ENCODE measurements at regions of chr3 and their contacts with region 1.

Region 1: GRCh38 chr3:161423911-161424522 is 52.7 kb upstream of the SPTSSB start:
- DNase-seq: peak; percentile 34
- ATAC-seq: no peak; the same call in 1 of the 2 replicates
- H3K4me3 ChIP-seq: no peak overlapping the region
- H3K27ac ChIP-seq: no peak overlapping the region
- H3K4me1 ChIP-seq: no peaks in the 10 kb centered on the region
- H3K27me3 ChIP-seq: no peaks in the 10 kb centered on the region
- CTCF ChIP-seq: peak; percentile 42 to 70 (median 68)
- POLR2A ChIP-seq: no peak
- RAD21 ChIP-seq: peak; percentile 87

Region 2: DNA sequence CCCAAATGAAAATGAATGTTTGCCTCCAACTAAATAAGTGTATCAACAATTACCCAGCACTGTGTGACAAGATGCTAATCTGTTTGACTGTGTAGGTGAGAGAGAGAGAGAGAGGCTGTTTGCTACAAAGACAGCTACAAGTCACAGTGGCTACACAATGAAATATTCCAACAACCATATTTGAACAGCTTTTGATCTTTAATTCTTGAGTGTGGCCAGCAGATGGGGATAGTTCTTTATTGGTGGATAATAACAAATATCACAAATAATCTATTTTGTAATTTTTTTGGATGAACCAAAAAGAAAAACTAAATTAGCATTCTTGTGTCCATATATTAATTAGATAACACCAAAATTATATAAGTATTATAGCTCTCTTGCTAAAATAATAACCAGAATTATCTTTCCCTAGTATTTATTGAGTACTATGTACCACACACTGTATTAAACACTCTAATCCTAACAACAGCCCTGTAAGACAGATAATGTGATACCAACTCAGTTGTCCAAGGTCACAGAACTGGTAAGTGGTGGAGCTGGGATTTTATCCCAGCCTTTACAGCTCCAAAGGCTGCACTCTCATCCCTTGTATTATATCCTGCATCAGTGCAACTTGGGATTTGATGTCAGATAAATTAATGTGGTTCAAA is 1260.7 kb before region 1 on chr3:
- CTCF ChIA-PET with region 1: no interaction called
- POLR2A ChIA-PET with region 1: no interaction called
- RAD21 ChIA-PET with region 1: no interaction called
- intact Hi-C with region 1: loop called (anchors 10 kb)
- DNase-seq: peak; percentile 23
- ATAC-seq: peak; percentile 75
- H3K4me3 ChIP-seq: no peak overlapping the region
- H3K27ac ChIP-seq: no peak overlapping the region
- H3K4me1 ChIP-seq: no peaks in the 10 kb centered on the region
- H3K27me3 ChIP-seq: no peaks in the 10 kb centered on the region
- CTCF ChIP-seq: peak; percentile 26 to 73 (median 54); a peak in 4 of 6 replicates
- POLR2A ChIP-seq: no peak
- RAD21 ChIP-seq: peak; percentile 80

Region 3: DNA sequence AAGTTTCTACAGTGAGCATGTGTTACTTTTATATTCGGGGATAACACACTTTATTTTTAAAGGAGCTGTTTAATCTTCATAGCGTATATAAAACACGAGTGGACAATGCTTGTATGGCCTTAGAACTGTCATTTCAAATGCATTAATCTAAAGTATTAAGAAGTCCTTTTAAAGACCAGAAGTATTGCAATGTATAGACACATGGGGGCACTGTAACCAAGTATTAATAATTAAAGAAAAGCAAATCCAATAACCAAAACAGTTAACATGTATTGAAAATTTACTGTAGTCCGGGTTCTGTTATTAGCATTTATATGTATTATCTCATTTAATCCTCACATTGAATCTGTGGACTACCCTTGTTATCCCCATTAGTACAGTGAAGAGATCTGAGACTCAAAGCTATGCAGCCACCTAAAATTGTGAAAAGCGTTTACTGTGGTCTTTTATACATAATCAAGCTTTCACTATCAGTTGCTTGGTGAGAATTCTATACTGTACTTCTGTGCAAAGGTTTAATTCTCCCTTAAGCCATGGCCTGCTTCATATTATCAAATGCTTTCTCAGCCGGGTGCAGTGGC is 737.0 kb before region 1 on chr3:
- CTCF ChIA-PET with region 1: no interaction called
- POLR2A ChIA-PET with region 1: no interaction called
- RAD21 ChIA-PET with region 1: no interaction called
- intact Hi-C with region 1: loop called (anchors 5 kb)
- DNase-seq: no peak
- ATAC-seq: peak; percentile 68; the same call in 1 of the 2 replicates
- H3K4me3 ChIP-seq: no peak overlapping the region
- H3K27ac ChIP-seq: no peak overlapping the region
- H3K4me1 ChIP-seq: peaks cover 0 to 2% of the 10 kb centered on the region in 2 experiments; a peak in 1 of 4 replicates
- H3K27me3 ChIP-seq: no peaks in the 10 kb centered on the region
- CTCF ChIP-seq: peak; percentile 12 to 70 (median 36); a peak in 3 of 6 replicates
- POLR2A ChIP-seq: no peak
- RAD21 ChIP-seq: peak; percentile 57

Region 4: DNA sequence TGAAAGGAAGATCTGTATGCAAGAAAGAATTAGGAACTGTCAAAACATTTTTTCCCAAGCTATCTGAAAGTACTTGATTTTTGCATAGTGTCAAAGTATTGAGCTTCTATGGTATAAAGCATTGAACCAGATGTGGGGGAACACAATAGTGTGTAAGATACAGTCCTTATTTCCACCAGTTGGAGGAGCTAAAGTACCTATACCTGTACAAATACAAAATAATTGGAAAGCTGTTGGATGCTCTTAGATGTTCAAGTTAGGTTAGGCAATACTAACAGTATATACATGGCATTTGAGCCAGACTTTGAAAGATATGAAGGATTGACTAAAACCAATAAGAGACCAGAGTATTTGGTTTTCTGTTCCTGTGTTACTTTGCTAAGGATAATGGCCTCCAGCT is 467.2 kb before region 1 on chr3:
- CTCF ChIA-PET with region 1: interaction called, 5 read pairs
- POLR2A ChIA-PET with region 1: no interaction called
- RAD21 ChIA-PET with region 1: no interaction called
- intact Hi-C with region 1: loop called (anchors 5 kb)
- DNase-seq: no peak
- ATAC-seq: peak; percentile 74
- H3K4me3 ChIP-seq: no peak overlapping the region
- H3K27ac ChIP-seq: no peak overlapping the region
- H3K4me1 ChIP-seq: no peaks in the 10 kb centered on the region
- H3K27me3 ChIP-seq: no peaks in the 10 kb centered on the region
- CTCF ChIP-seq: peak; percentile 20 to 44 (median 26); a peak in 4 of 6 replicates
- POLR2A ChIP-seq: no peak
- RAD21 ChIP-seq: peak; percentile 63

Region 5: GRCh38 chr3:161274719-161275298 is 149.2 kb before region 1 on chr3:
- CTCF ChIA-PET with region 1: interaction called, 16 read pairs
- POLR2A ChIA-PET with region 1: no interaction called
- RAD21 ChIA-PET with region 1: no interaction called
- intact Hi-C with region 1: loop called (anchors 1 kb)
- DNase-seq: peak; percentile 54
- ATAC-seq: peak; percentile 84
- H3K4me3 ChIP-seq: no peak overlapping the region
- H3K27ac ChIP-seq: no peak overlapping the region
- H3K4me1 ChIP-seq: no peaks in the 10 kb centered on the region
- H3K27me3 ChIP-seq: no peaks in the 10 kb centered on the region
- CTCF ChIP-seq: peak; percentile 51 to 87 (median 65); a peak in 5 of 6 replicates
- POLR2A ChIP-seq: no peak
- RAD21 ChIP-seq: peak; percentile 67

Region 6: GRCh38 chr3:161444006-161444693 is 20.1 kb after region 1 on chr3:
- CTCF ChIA-PET with region 1: no interaction called
- POLR2A ChIA-PET with region 1: no interaction called
- RAD21 ChIA-PET with region 1: no interaction called
- intact Hi-C with region 1: no loop called
- DNase-seq: no peak
- ATAC-seq: no peak
- H3K4me3 ChIP-seq: no peak overlapping the region
- H3K27ac ChIP-seq: no peak overlapping the region
- H3K4me1 ChIP-seq: no peaks in the 10 kb centered on the region
- H3K27me3 ChIP-seq: no peaks in the 10 kb centered on the region
- CTCF ChIP-seq: no peak
- POLR2A ChIP-seq: no peak
- RAD21 ChIP-seq: no peak

Region 7: DNA sequence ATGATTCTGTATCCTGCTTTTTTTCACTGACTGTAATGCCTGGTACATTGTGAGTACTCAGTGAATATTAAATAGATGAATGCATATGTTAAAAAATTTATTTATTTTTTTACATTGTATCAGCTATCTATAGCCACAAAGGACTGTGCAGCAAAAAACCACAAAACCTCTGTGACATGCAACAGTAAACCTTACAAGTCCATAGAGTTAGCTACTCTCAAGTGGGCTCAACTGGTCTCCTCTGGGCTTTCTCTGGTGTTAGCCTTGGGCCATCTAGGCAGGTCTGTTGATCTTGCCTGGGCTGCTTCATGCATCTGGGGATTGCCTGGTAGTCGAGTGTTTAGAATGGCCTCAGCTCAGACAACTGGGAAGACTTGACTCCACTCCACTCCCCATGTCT is 107.9 kb after region 1 on chr3:
- CTCF ChIA-PET with region 1: no interaction called
- POLR2A ChIA-PET with region 1: no interaction called
- RAD21 ChIA-PET with region 1: no interaction called
- intact Hi-C with region 1: no loop called
- DNase-seq: no peak
- ATAC-seq: no peak
- H3K4me3 ChIP-seq: no peak overlapping the region
- H3K27ac ChIP-seq: no peak overlapping the region
- H3K4me1 ChIP-seq: no peaks in the 10 kb centered on the region
- H3K27me3 ChIP-seq: no peaks in the 10 kb centered on the region
- CTCF ChIP-seq: no peak
- POLR2A ChIP-seq: no peak
- RAD21 ChIP-seq: no peak

Measured in HCT116 (cell line).